Activated CD4-positive, alpha-beta T cell treated with anti-CD3 and anti-CD28 coated beads, Interleukin-2, amount 10 ng/mL, durations not matched to agents 24 days and 14 days (primary cell): ENCODE measurements at regions of chr1 and their contacts with region 1.

Region 1: GRCh38 chr1:151024540-151025146 is 11.7 kb upstream of the BNIPL start:
- DNase-seq: peak; percentile 95
- H3K4me3 Mint-ChIP-seq: peak overlapping the region; percentile 30
- H3K27ac Mint-ChIP-seq: peak overlapping the region; percentile 59
- H3K4me1 Mint-ChIP-seq: peaks cover 7% of the 10 kb centered on the region
- H3K27me3 Mint-ChIP-seq: no peaks in the 10 kb centered on the region

Region 2: GRCh38 chr1:151098126-151098525 is 73.5 kb after region 1 on chr1:
- intact Hi-C with region 1: loop called (anchors 2 kb)
- DNase-seq: no peak
- H3K4me3 Mint-ChIP-seq: no peak overlapping the region
- H3K27ac Mint-ChIP-seq: no peak overlapping the region
- H3K4me1 Mint-ChIP-seq: no peaks in the 10 kb centered on the region
- H3K27me3 Mint-ChIP-seq: no peaks in the 10 kb centered on the region